ENCODE measurements at regions of chr18 and their contacts with region 1.

Region 1: GRCh38 chr18:58263055-58263957 is 219.3 kb downstream of the NEDD4L start:
- DNase-seq: peak; percentile 36
- H3K4me3 Mint-ChIP-seq: peak overlapping the region; percentile 63
- H3K27ac Mint-ChIP-seq: peak overlapping the region; percentile 94
- H3K4me1 Mint-ChIP-seq: peaks cover 62% of the 10 kb centered on the region
- H3K27me3 Mint-ChIP-seq: no peaks in the 10 kb centered on the region
- CTCF ChIP-seq: no peak

Region 2: DNA sequence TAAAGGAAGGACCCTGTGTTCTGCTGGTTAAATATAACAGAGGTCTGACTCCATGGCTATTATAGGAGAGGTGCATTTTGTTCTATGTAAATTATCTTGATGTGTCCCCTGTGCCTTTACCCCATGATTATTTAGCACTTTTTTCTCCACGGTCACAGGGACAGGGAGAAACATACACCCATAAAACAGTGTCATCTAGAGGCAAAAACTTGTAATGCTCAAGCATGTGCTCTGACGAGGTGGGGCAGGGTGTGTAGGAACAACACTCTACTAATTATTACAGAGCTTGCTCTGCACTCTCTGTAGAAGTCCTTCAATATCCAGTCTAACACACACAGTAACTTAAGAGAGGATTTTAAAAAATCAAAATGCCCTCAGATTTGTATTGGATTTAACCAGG is 31.4 kb before region 1 on chr18:
- CTCF ChIA-PET with region 1: no interaction called
- intact Hi-C with region 1: no loop called
- DNase-seq: peak; percentile 41
- H3K4me3 Mint-ChIP-seq: no peak overlapping the region
- H3K27ac Mint-ChIP-seq: peak overlapping the region; percentile 91
- H3K4me1 Mint-ChIP-seq: peaks cover 83% of the 10 kb centered on the region
- H3K27me3 Mint-ChIP-seq: no peaks in the 10 kb centered on the region
- CTCF ChIP-seq: no peak

Region 3: GRCh38 chr18:58321986-58322385 is 58.7 kb after region 1 on chr18:
- CTCF ChIA-PET with region 1: interaction called, 13 read pairs
- intact Hi-C with region 1: loop called (anchors 5 kb)
- DNase-seq: peak; percentile 70
- H3K4me3 Mint-ChIP-seq: no peak overlapping the region
- H3K27ac Mint-ChIP-seq: peak overlapping the region; percentile 41
- H3K4me1 Mint-ChIP-seq: peaks cover 37% of the 10 kb centered on the region
- H3K27me3 Mint-ChIP-seq: no peaks in the 10 kb centered on the region
- CTCF ChIP-seq: peak; percentile 54

Measured in Calu3 (cell line).